Heart left ventricle (tissue), 16 donors: ENCODE measurements at regions of chr15 and their contacts with region 1.

Region 1: DNA sequence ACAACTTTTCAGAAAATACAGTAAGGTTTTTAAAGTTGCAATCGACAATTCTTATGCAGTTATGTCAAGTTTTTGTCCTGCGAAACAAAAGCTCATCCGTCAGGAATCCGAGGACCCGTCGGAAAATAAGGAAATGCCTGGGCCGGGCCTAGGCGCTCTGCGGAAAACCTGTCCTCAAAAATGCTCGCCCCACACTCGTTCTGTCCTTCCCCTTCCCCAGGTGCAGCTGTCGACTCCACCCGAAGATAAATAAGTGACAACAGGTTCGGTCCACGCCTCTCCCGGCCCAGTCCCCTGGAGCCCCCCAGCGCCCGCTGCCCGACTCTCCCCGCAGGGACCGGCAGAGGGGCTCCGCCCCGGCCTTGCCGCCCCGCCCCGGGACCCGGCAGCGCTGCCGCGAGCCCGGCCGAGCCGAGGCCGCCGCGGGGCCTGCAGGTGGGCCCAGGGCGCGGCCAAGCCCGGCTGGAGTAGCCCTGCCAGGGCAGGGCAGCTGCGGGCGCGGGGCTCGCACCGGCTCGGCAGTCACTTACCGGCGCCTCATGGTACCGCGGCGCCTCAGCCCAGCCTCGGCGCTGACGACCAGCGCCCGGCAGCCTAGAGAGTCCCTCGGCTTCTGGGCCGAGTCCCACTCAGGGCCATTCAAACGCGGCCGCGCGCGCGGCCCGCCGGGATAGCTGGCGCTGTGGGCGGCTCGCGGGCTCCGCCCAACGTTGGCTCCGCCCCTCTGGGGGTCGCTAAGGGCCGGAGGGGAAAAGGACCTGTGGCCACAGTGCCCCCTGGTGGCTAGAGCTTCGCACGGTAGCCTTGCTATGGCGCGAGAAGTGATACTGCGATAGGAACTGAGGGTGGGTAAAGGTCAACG is at the start of gene KATNBL1:
- DNase-seq: peak; percentile 95 to 99 (median 97)
- ATAC-seq: peak; percentile 97 to 100 (median 100)
- H3K4me3 ChIP-seq: peak within 1 kb of the TSS; percentile 45 to 97 (median 73)
- H3K27ac ChIP-seq: peak within 1 kb of the TSS; percentile 68 to 90 (median 82)
- H3K4me1 ChIP-seq: peaks cover 0 to 17% (median 10%) of the 10 kb centered on the region in 12 donors
- H3K27me3 ChIP-seq: no peaks in the 10 kb centered on the region
- CTCF ChIP-seq: peak; percentile 88 to 99 (median 97)
- POLR2A ChIP-seq: peak in 1 of 2 donors; percentile 95
- total RNA-seq, gene KATNBL1: 10.1 to 21.7 (median 15.8) TPM

Region 2: GRCh38 chr15:33737687-33738601 is 471.7 kb before region 1 on chr15:
- intact Hi-C with region 1: loop called in 1 of 10 experiments (anchors 10 kb)
- DNase-seq: no peak
- ATAC-seq: peak in 2 of 4 donors; percentile 49 to 65
- H3K4me3 ChIP-seq: no peak overlapping the region
- H3K27ac ChIP-seq: no peak overlapping the region
- H3K4me1 ChIP-seq: no peaks in the 10 kb centered on the region
- H3K27me3 ChIP-seq: peaks cover 0 to 4% (median 0%) of the 10 kb centered on the region in 9 donors
- CTCF ChIP-seq: peak; percentile 53 to 74 (median 65)
- POLR2A ChIP-seq: no peak

Region 3: DNA sequence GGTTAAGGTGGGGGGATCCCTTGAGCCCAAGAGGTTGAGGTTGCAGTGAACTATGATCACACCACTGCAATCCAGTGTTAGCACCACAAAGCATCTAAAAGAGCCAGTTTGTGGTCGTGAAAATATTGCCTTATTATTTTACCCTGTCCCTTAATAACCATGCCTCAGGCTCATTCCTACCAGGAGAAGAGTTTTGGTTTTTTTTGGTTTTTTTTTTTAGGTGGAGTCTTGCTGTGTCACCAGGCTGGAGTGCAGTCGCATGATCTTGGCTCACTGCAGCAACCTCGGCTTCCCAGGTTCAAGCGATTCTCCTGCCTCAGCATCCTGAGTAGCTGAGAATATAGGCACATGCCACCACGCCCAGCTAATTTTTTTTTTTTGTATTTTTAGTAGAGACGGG is 152.7 kb before region 1 on chr15:
- intact Hi-C with region 1: loop called (anchors 1 to 5 kb)
- DNase-seq: no peak
- ATAC-seq: no peak
- H3K4me3 ChIP-seq: no peak overlapping the region
- H3K27ac ChIP-seq: peak overlapping the region in 2 of 12 donors; percentile 43 to 64
- H3K4me1 ChIP-seq: peaks cover 0 to 7% (median 0%) of the 10 kb centered on the region in 12 donors
- H3K27me3 ChIP-seq: no peaks in the 10 kb centered on the region
- CTCF ChIP-seq: no peak
- POLR2A ChIP-seq: no peak

Region 4: GRCh38 chr15:34065941-34066340 is 143.7 kb before region 1 on chr15:
- intact Hi-C with region 1: loop called (anchors 1 to 5 kb)
- DNase-seq: no peak
- ATAC-seq: no peak
- H3K4me3 ChIP-seq: no peak overlapping the region
- H3K27ac ChIP-seq: no peak overlapping the region
- H3K4me1 ChIP-seq: peaks cover 0 to 5% (median 0%) of the 10 kb centered on the region in 12 donors
- H3K27me3 ChIP-seq: no peaks in the 10 kb centered on the region
- CTCF ChIP-seq: no peak
- POLR2A ChIP-seq: no peak

Region 5: GRCh38 chr15:34101366-34102175 is 108.1 kb before region 1 on chr15 and contains the starts of genes EMC7 and PGBD4:
- intact Hi-C with region 1: loop called in 5 of 10 experiments (anchors 2 to 5 kb)
- DNase-seq: peak; percentile 99
- ATAC-seq: peak; percentile 100
- H3K4me3 ChIP-seq: peak within 1 kb of the TSS; percentile 72 to 95 (median 86)
- H3K27ac ChIP-seq: peak within 1 kb of the TSS; percentile 4 to 95 (median 88)
- H3K4me1 ChIP-seq: peaks cover 6 to 34% (median 22%) of the 10 kb centered on the region in 12 donors
- H3K27me3 ChIP-seq: no peaks in the 10 kb centered on the region
- CTCF ChIP-seq: no peak
- POLR2A ChIP-seq: peak in 1 of 2 donors; percentile 77
- total RNA-seq, gene EMC7: 28.9 to 95.2 (median 59.1) TPM
- total RNA-seq, gene PGBD4: 0.95 to 2.1 (median 1.7) TPM

Region 6: GRCh38 chr15:34109797-34110663 is 99.6 kb before region 1 on chr15:
- intact Hi-C with region 1: loop called in 1 of 10 experiments (anchors 5 kb)
- DNase-seq: no peak
- ATAC-seq: no peak
- H3K4me3 ChIP-seq: no peak overlapping the region
- H3K27ac ChIP-seq: no peak overlapping the region
- H3K4me1 ChIP-seq: no peaks in the 10 kb centered on the region
- H3K27me3 ChIP-seq: peaks cover 0 to 5% (median 0%) of the 10 kb centered on the region in 9 donors
- CTCF ChIP-seq: peak in 8 of 12 donors; percentile 28 to 46 (median 44)
- POLR2A ChIP-seq: no peak

Region 7: GRCh38 chr15:34223904-34224596 is 14.4 kb after region 1 on chr15:
- intact Hi-C with region 1: loop called in 2 of 10 experiments (anchors 1 kb)
- DNase-seq: no peak
- ATAC-seq: peak in 3 of 4 donors; percentile 28 to 38 (median 29)
- H3K4me3 ChIP-seq: peak overlapping the region; percentile 71 to 97 (median 84)
- H3K27ac ChIP-seq: peak overlapping the region; percentile 43 to 99 (median 91)
- H3K4me1 ChIP-seq: peaks cover 0 to 23% (median 16%) of the 10 kb centered on the region in 12 donors
- H3K27me3 ChIP-seq: no peaks in the 10 kb centered on the region
- CTCF ChIP-seq: no peak
- POLR2A ChIP-seq: no peak